MCF 10A (cell line): ENCODE measurements at regions of chr20 and their contacts with region 1.

Region 1: GRCh38 chr20:50540620-50541605 is 30.7 kb downstream of the PTPN1 start:
- DNase-seq: peak; percentile 74
- H3K4me3 Mint-ChIP-seq: peak overlapping the region; percentile 51
- H3K27ac Mint-ChIP-seq: peak overlapping the region; percentile 50
- H3K4me1 Mint-ChIP-seq: peaks cover 45% of the 10 kb centered on the region
- H3K27me3 Mint-ChIP-seq: no peaks in the 10 kb centered on the region
- CTCF ChIP-seq: no peak

Region 2: GRCh38 chr20:50516180-50516934 is 24.6 kb before region 1 on chr20:
- CTCF ChIA-PET with region 1: interaction called, 3 read pairs
- POLR2A ChIA-PET with region 1: interaction called, 109 read pairs
- intact Hi-C with region 1: no loop called
- DNase-seq: no peak
- H3K4me3 Mint-ChIP-seq: no peak overlapping the region
- H3K27ac Mint-ChIP-seq: no peak overlapping the region
- H3K4me1 Mint-ChIP-seq: peaks cover 60% of the 10 kb centered on the region
- H3K27me3 Mint-ChIP-seq: no peaks in the 10 kb centered on the region
- CTCF ChIP-seq: no peak

Region 3: GRCh38 chr20:50555180-50555579 is 14.3 kb after region 1 on chr20:
- CTCF ChIA-PET with region 1: interaction called, 6 read pairs
- POLR2A ChIA-PET with region 1: interaction called, 50 read pairs
- intact Hi-C with region 1: no loop called
- DNase-seq: no peak
- H3K4me3 Mint-ChIP-seq: no peak overlapping the region
- H3K27ac Mint-ChIP-seq: no peak overlapping the region
- H3K4me1 Mint-ChIP-seq: peaks cover 26% of the 10 kb centered on the region
- H3K27me3 Mint-ChIP-seq: no peaks in the 10 kb centered on the region
- CTCF ChIP-seq: no peak

Region 4: GRCh38 chr20:50713657-50714101 is 172.8 kb after region 1 on chr20:
- CTCF ChIA-PET with region 1: no interaction called
- POLR2A ChIA-PET with region 1: no interaction called
- intact Hi-C with region 1: no loop called
- DNase-seq: no peak
- H3K4me3 Mint-ChIP-seq: no peak overlapping the region
- H3K27ac Mint-ChIP-seq: no peak overlapping the region
- H3K4me1 Mint-ChIP-seq: peaks cover 14% of the 10 kb centered on the region
- H3K27me3 Mint-ChIP-seq: no peaks in the 10 kb centered on the region
- CTCF ChIP-seq: no peak